Activated CD8-positive, alpha-beta T cell treated with anti-CD3 and anti-CD28 coated beads, Interleukin-2, amount 10 ng/mL, durations not matched to agents 7 days and 5 days (primary cell): ENCODE measurements at regions of chr4 and their contacts with region 1.

Region 1: GRCh38 chr4:15457406-15458201 is 12.1 kb upstream of the CC2D2A start:
- DNase-seq: no peak
- ATAC-seq: peak; percentile 60
- H3K4me3 Mint-ChIP-seq: no peak overlapping the region
- H3K27ac Mint-ChIP-seq: no peak overlapping the region
- H3K4me1 Mint-ChIP-seq: no peaks in the 10 kb centered on the region
- H3K27me3 Mint-ChIP-seq: peaks cover 11% of the 10 kb centered on the region

Region 2: GRCh38 chr4:15231265-15232091 is 226.1 kb before region 1 on chr4:
- CTCF ChIA-PET with region 1: interaction called, 148 read pairs
- POLR2A ChIA-PET with region 1: interaction called, 3 read pairs
- DNase-seq: peak; percentile 84
- ATAC-seq: peak; percentile 83
- H3K4me3 Mint-ChIP-seq: no peak overlapping the region
- H3K27ac Mint-ChIP-seq: no peak overlapping the region
- H3K4me1 Mint-ChIP-seq: peaks cover 31% of the 10 kb centered on the region
- H3K27me3 Mint-ChIP-seq: peaks cover 3% of the 10 kb centered on the region

Region 3: GRCh38 chr4:15238720-15239119 is 218.9 kb before region 1 on chr4:
- CTCF ChIA-PET with region 1: interaction called, 148 read pairs
- POLR2A ChIA-PET with region 1: no interaction called
- DNase-seq: peak; percentile 44
- ATAC-seq: peak; percentile 30
- H3K4me3 Mint-ChIP-seq: no peak overlapping the region
- H3K27ac Mint-ChIP-seq: no peak overlapping the region
- H3K4me1 Mint-ChIP-seq: peaks cover 12% of the 10 kb centered on the region
- H3K27me3 Mint-ChIP-seq: peaks cover 6% of the 10 kb centered on the region

Region 4: GRCh38 chr4:15469402-15470127 is 12.0 kb after region 1 on chr4 and contains the start of gene CC2D2A:
- CTCF ChIA-PET with region 1: interaction called, 32 read pairs
- POLR2A ChIA-PET with region 1: no interaction called
- DNase-seq: no peak
- ATAC-seq: no peak
- H3K4me3 Mint-ChIP-seq: no peak within 1 kb of the TSS
- H3K27ac Mint-ChIP-seq: no peak within 1 kb of the TSS
- H3K4me1 Mint-ChIP-seq: peaks cover 10% of the 10 kb centered on the region
- H3K27me3 Mint-ChIP-seq: peaks cover 4% of the 10 kb centered on the region
- total RNA-seq, gene CC2D2A: not detected